HEK293 (cell line): ENCODE measurements at regions of chr2 and their contacts with region 1.

Region 1: GRCh38 chr2:233915128-233915527 is 2.0 kb upstream of the TRPM8 start:
- H3K4me3 ChIP-seq: no peak overlapping the region
- H3K27ac ChIP-seq: no peak overlapping the region
- H3K4me1 ChIP-seq: no peaks in the 10 kb centered on the region
- CTCF ChIP-seq: no peak; the same call in 1 of the 2 replicates

Region 2: DNA sequence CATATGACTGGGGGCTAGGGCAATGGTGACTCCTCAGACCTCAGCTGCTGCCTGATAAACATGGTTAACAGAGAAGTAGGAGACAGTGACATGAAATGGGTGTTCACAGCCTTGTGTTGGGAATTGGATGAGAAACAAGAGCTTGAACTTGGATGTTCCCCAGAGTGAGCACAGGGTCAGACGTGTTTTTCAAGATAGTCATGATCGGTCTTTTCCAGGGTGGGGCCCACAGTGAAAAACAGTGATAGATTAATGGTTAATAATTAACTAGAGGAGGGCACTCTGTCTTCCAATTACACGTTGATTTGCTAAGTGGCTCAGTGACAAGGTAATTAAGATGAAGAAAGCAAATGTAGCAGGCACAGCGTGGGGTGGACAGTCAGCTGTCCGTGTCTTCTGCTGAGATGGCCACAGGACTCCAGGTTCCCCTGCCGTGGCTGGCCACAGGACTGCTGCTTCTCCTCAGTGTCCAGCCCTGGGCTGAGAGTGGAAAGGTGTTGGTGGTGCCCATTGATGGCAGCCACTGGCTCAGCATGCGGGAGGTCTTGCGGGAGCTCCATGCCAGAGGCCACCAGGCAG is 186.3 kb before region 1 on chr2 and contains the start of gene UGT1A3:
- CTCF ChIA-PET with region 1: no interaction called
- POLR2A ChIA-PET with region 1: no interaction called
- H3K4me3 ChIP-seq: no peak within 1 kb of the TSS
- H3K27ac ChIP-seq: no peak within 1 kb of the TSS
- H3K4me1 ChIP-seq: no peaks in the 10 kb centered on the region
- CTCF ChIP-seq: no peak

Region 3: GRCh38 chr2:233928594-233929351 is 13.6 kb after region 1 on chr2:
- CTCF ChIA-PET with region 1: interaction called, 17 read pairs
- POLR2A ChIA-PET with region 1: no interaction called
- H3K4me3 ChIP-seq: no peak overlapping the region
- H3K27ac ChIP-seq: no peak overlapping the region
- H3K4me1 ChIP-seq: no peaks in the 10 kb centered on the region
- CTCF ChIP-seq: peak; percentile 26; the same call in 1 of the 2 replicates

Region 4: DNA sequence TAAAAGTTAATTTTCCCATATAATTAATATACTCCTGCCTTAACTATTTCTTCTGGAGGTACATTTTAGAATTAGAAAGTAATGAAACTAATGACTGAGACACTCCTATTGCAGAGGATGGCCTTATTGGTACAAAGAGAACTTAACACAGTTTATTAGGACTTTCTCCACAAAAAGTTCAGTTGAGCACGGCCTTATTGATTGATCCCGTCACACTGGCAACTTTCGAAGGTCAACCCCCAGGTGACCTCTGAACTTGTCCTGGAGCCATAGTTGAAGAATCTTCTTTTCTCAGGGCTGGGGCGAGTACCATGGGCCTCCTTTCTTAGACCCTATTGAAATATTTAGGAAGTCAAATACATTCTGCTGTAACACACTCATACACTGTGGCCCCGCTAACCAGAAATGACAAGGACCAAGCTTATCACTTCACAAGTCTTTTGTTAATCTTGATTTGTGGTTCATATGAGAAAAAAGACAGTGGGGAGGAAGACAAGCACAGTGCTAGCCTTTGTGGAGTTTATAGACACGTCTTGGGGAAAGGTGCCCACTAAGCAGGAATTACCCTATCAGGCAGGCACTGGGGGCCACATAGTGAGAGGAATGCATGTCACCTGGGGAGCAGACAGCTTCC is 146.6 kb after region 1 on chr2:
- CTCF ChIA-PET with region 1: no interaction called
- POLR2A ChIA-PET with region 1: no interaction called
- H3K4me3 ChIP-seq: no peak overlapping the region
- H3K27ac ChIP-seq: no peak overlapping the region
- H3K4me1 ChIP-seq: no peaks in the 10 kb centered on the region
- CTCF ChIP-seq: no peak